ENCODE measurements at regions of chr1 and their contacts with region 1.

Region 1: GRCh38 chr1:202639500-202639899 is 70.8 kb downstream of the SYT2 start:
- DNase-seq: no peak
- ATAC-seq: no peak
- H3K4me3 Mint-ChIP-seq: no peak overlapping the region
- H3K27ac Mint-ChIP-seq: no peak overlapping the region
- H3K4me1 Mint-ChIP-seq: peaks cover 22% of the 10 kb centered on the region
- H3K27me3 Mint-ChIP-seq: peaks cover 47% of the 10 kb centered on the region
- CTCF ChIP-seq: no peak

Region 2: GRCh38 chr1:202221911-202222909 is 417.3 kb before region 1 on chr1:
- CTCF ChIA-PET with region 1: no interaction called
- POLR2A ChIA-PET with region 1: no interaction called
- intact Hi-C with region 1: loop called (anchors 10 kb)
- DNase-seq: no peak
- ATAC-seq: peak; percentile 30
- H3K4me3 Mint-ChIP-seq: no peak overlapping the region
- H3K27ac Mint-ChIP-seq: no peak overlapping the region
- H3K4me1 Mint-ChIP-seq: peaks cover 5% of the 10 kb centered on the region
- H3K27me3 Mint-ChIP-seq: no peaks in the 10 kb centered on the region
- CTCF ChIP-seq: no peak

Region 3: GRCh38 chr1:202343652-202344349 is 295.7 kb before region 1 on chr1:
- CTCF ChIA-PET with region 1: no interaction called
- POLR2A ChIA-PET with region 1: no interaction called
- intact Hi-C with region 1: no loop called
- DNase-seq: no peak
- ATAC-seq: no peak
- H3K4me3 Mint-ChIP-seq: peak overlapping the region; percentile 61
- H3K27ac Mint-ChIP-seq: peak overlapping the region; percentile 62
- H3K4me1 Mint-ChIP-seq: peaks cover 22% of the 10 kb centered on the region
- H3K27me3 Mint-ChIP-seq: no peaks in the 10 kb centered on the region
- CTCF ChIP-seq: peak; percentile 77

Region 4: DNA sequence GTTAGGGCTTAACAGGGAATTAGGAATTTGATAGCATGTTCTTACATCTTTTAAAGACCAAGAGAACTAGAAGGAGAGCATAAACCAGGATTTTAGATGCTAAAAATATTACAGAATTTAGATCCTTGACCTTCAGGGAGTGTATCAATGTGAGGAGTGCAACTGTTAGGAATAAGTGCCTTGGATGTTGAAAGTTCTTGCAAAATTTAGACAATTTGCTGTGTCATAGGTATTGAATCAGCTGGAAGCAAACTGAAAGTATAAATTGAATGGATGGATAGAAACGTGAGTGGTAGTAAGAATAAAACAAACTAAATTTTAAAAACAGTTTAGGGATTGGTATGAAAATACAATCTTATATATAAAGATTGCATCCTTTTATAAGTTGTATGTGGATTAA is 263.3 kb before region 1 on chr1:
- CTCF ChIA-PET with region 1: no interaction called
- POLR2A ChIA-PET with region 1: no interaction called
- intact Hi-C with region 1: no loop called
- DNase-seq: no peak
- ATAC-seq: no peak
- H3K4me3 Mint-ChIP-seq: no peak overlapping the region
- H3K27ac Mint-ChIP-seq: no peak overlapping the region
- H3K4me1 Mint-ChIP-seq: peaks cover 25% of the 10 kb centered on the region
- H3K27me3 Mint-ChIP-seq: no peaks in the 10 kb centered on the region
- CTCF ChIP-seq: no peak

Region 5: DNA sequence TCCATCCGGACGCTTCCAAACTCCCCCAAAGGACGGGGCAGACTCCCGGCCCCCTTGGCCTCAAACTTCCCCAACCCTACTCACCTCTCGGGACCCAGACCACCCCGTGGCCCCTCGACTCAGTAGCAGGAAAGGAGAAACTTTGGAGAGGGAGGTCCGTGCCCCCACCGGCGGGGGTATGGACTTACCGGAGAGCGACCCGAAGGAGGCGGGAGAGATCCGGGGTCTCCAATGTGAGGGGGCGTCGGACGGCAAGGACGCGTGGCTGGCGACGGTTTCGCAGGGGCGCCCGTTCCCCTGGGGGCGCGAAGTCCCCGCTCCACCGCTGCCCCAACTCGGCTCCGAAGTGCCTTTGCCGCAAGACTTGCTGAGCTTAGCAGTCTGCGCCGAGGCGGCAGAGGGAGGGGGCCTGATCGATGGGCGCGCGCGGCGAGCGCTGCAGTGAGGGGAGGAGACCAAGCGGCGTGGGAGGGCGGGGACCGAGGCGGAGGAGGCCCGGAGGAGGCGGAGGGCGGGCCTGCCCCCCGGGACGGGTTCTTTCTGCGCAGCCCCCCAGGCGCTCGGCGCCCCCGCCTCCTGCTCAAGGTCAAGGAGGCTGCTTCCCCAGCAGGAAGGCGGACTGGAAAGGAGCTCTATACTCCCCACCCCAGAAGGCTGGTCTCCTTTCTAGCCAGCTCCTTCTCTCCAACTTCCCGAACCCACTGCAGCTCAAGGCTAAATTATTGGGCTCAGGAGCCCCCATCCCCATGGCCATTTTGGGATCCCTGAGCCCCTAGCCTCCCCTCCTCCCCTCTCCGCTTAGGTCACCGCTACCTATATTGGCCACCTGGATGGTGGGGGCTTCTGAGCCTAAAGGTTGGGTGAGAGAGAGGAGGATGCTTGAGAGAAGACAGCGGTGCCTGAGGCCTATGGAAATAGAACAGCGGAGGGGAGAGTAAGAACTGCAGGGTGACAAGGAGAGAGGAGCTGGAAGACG is 70.9 kb after region 1 on chr1 and contains the start of gene SYT2:
- CTCF ChIA-PET with region 1: no interaction called
- POLR2A ChIA-PET with region 1: no interaction called
- intact Hi-C with region 1: no loop called
- DNase-seq: peak; percentile 24
- ATAC-seq: peak; percentile 60
- H3K4me3 Mint-ChIP-seq: no peak within 1 kb of the TSS
- H3K27ac Mint-ChIP-seq: no peak within 1 kb of the TSS
- H3K4me1 Mint-ChIP-seq: peaks cover 3% of the 10 kb centered on the region
- H3K27me3 Mint-ChIP-seq: peaks cover 56% of the 10 kb centered on the region
- CTCF ChIP-seq: no peak
- total RNA-seq, gene SYT2: not detected